ENCODE measurements at regions of chr18 and their contacts with region 1.

Region 1: DNA sequence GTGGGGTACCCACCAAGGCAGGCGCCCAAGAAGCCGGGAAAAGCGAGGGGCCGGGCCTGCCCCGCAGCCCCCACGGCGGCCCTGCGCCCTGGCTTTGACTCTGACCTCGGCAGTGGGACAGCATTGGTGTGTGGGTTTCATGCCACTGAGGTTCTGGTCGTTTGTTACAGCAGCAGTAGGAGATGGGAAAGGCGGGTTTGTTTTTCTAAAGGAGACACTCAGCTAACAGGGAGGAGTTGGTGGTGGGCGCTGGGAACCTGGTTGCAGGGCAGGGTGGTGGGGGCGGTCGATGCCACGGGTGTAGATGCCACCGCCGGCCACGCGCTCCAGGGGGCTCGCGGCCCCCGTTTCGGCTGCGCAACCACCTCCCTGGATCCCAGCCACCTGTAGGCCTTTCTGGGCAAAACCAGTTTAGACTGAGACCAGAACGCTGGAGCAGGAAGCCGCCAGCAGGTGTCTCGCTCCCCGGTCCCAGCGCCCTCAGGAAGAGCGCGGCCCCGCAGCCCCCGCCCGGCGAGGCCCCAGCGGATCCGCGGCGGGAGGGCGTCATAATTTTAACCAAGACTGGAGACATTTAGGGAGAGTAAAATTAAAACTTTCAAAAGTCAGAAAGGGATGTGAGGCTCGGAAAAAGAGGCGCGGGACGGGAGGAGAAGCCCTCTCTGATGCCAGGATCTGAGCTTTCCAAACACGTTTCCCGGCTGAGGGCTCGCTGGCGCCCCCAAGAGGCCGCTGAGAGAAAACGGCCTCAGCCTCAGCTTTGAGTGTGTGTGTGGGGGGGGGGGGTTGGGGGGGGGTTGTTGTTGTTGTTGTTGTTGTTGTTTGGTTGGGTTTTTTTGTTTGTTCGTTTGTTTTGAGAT is 17.4 kb downstream of the CIDEA start:
- DNase-seq: peak; percentile 77
- ATAC-seq: peak; percentile 93
- H3K4me3 Mint-ChIP-seq: peak overlapping the region; percentile 65
- H3K27ac Mint-ChIP-seq: peak overlapping the region; percentile 36; the same call in 1 of the 2 replicates
- H3K4me1 Mint-ChIP-seq: peaks cover 5% of the 10 kb centered on the region; the same call in 1 of the 2 replicates
- H3K27me3 Mint-ChIP-seq: no peaks in the 10 kb centered on the region
- CTCF ChIP-seq: peak; percentile 68

Region 2: GRCh38 chr18:11883153-11883552 is 388.5 kb before region 1 on chr18:
- CTCF ChIA-PET with region 1: no interaction called
- POLR2A ChIA-PET with region 1: no interaction called
- DNase-seq: no peak
- ATAC-seq: no peak
- H3K4me3 Mint-ChIP-seq: no peak overlapping the region
- H3K27ac Mint-ChIP-seq: no peak overlapping the region
- H3K4me1 Mint-ChIP-seq: peaks cover 8% of the 10 kb centered on the region
- H3K27me3 Mint-ChIP-seq: no peaks in the 10 kb centered on the region
- CTCF ChIP-seq: no peak

Region 3: DNA sequence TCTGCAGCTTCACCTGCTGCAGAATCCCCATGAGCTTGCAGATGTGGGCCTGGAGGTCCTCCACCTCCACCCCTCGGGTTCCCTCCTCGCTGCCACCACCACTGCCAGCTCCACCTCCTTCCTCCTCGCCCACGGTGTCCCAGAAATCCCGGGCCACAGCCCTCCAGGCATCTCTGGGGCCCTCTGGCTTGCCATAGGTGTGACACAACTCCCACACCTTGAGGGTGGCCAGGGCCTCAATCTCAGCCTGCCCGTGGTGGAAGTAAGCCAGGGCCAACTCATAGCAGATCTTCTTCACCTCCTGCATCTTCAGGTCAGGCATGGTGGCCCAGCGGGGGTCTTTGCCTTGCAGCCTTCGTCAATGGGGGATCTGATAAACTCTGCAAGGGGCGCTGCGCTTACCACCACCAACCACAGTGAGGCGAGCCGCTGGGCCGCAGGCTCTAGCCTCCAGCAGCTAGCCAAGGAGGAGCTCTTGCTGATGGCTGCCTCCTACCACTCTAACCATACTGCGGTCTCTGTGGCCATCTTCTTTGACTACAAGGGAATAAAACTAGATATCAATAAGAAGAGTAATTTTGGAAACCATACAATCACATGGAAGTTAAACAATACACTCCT is 214.1 kb before region 1 on chr18:
- CTCF ChIA-PET with region 1: interaction called, 10 read pairs
- POLR2A ChIA-PET with region 1: no interaction called
- DNase-seq: peak; percentile 57
- ATAC-seq: peak; percentile 90
- H3K4me3 Mint-ChIP-seq: no peak overlapping the region
- H3K27ac Mint-ChIP-seq: no peak overlapping the region
- H3K4me1 Mint-ChIP-seq: no peaks in the 10 kb centered on the region
- H3K27me3 Mint-ChIP-seq: no peaks in the 10 kb centered on the region; the same call in 1 of the 2 replicates
- CTCF ChIP-seq: peak; percentile 24

Region 4: GRCh38 chr18:12246849-12247808 is 24.5 kb before region 1 on chr18:
- CTCF ChIA-PET with region 1: interaction called, 50 read pairs
- POLR2A ChIA-PET with region 1: no interaction called
- DNase-seq: peak; percentile 78
- ATAC-seq: peak; percentile 99
- H3K4me3 Mint-ChIP-seq: no peak overlapping the region
- H3K27ac Mint-ChIP-seq: no peak overlapping the region
- H3K4me1 Mint-ChIP-seq: no peaks in the 10 kb centered on the region
- H3K27me3 Mint-ChIP-seq: peaks cover 41% of the 10 kb centered on the region
- CTCF ChIP-seq: peak; percentile 42; the same call in 1 of the 2 replicates

Region 5: DNA sequence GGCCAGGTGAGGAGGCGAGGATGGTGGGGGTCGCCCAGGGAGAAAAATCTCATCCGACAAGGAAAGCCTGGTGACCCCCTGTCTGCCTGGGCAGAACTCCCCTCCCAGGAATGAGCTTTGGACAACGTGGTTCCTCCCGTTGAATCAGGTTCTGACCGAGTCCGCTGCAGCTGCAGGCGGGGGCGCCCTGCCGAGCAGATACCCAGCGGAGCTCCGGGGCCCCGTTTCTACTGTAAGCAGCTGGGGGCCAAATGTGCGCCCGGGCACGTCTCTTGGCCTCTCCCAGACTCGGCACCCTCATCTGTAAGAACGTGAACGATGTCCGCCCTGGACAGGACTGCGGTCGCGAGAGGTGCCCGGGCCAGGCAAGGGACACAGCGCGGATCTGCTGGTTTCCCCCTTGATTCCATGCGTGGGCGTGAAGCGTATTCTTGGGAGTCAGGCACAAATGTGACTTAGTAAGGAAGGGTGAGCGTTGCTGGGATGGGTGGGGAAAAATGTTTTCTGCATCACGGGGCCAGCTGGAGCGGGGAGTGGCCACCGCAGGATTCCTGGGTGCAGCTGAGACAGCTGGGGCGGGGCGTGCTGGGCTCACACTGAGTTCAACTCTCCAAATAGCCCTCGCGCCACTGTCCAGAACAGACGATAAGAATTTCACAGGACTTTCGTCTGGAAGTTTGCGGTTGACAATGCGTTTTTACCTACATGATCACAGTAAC is 16.2 kb after region 1 on chr18:
- CTCF ChIA-PET with region 1: interaction called, 81 read pairs
- POLR2A ChIA-PET with region 1: interaction called, 7 read pairs
- DNase-seq: peak; percentile 57
- ATAC-seq: peak; percentile 9
- H3K4me3 Mint-ChIP-seq: peak overlapping the region; percentile 82
- H3K27ac Mint-ChIP-seq: peak overlapping the region; percentile 55
- H3K4me1 Mint-ChIP-seq: peaks cover 36% of the 10 kb centered on the region
- H3K27me3 Mint-ChIP-seq: peaks cover 33% of the 10 kb centered on the region
- CTCF ChIP-seq: no peak

Region 6: GRCh38 chr18:12317664-12318333 is 46.2 kb after region 1 on chr18:
- CTCF ChIA-PET with region 1: interaction called, 11 read pairs
- POLR2A ChIA-PET with region 1: no interaction called
- DNase-seq: no peak
- ATAC-seq: no peak
- H3K4me3 Mint-ChIP-seq: no peak overlapping the region
- H3K27ac Mint-ChIP-seq: peak overlapping the region; percentile 76
- H3K4me1 Mint-ChIP-seq: peaks cover 14% of the 10 kb centered on the region
- H3K27me3 Mint-ChIP-seq: no peaks in the 10 kb centered on the region
- CTCF ChIP-seq: no peak

Region 7: GRCh38 chr18:12336875-12337274 is 65.3 kb after region 1 on chr18:
- CTCF ChIA-PET with region 1: interaction called, 14 read pairs
- POLR2A ChIA-PET with region 1: interaction called, 3 read pairs
- DNase-seq: no peak
- ATAC-seq: no peak
- H3K4me3 Mint-ChIP-seq: peak overlapping the region; percentile 35
- H3K27ac Mint-ChIP-seq: peak overlapping the region; percentile 92
- H3K4me1 Mint-ChIP-seq: peaks cover 58% of the 10 kb centered on the region
- H3K27me3 Mint-ChIP-seq: no peaks in the 10 kb centered on the region
- CTCF ChIP-seq: no peak